HCT116 (cell line): ENCODE measurements at regions of chr9 and their contacts with region 1.

Region 1: GRCh38 chr9:122546190-122546589 is 6.7 kb upstream of the OR1N2 start:
- DNase-seq: no peak
- ATAC-seq: no peak
- H3K4me3 ChIP-seq: no peak overlapping the region
- H3K27ac ChIP-seq: no peak overlapping the region
- H3K4me1 ChIP-seq: no peaks in the 10 kb centered on the region
- H3K27me3 ChIP-seq: peaks cover 25% of the 10 kb centered on the region
- CTCF ChIP-seq: no peak
- POLR2A ChIP-seq: no peak
- RAD21 ChIP-seq: no peak

Region 2: DNA sequence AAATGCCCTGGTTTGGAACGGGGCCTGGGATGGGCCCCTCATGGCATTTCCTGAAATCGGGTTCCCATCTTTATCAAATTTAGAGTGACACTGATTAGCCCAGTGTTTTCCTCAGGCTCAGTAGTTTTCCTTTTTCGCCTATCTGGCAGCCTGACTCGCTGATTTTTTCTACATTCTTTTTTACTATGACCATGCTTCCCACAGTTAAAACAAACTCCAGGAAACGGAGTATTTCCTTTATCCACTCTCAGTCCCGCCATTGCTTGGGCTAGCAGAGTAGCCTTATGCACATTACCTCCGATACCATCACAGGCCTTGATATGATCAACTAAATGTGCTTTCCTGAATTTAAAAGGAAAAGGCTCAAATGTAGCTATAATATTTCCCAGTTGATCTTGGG is 73.8 kb after region 1 on chr9:
- CTCF ChIA-PET with region 1: no interaction called
- POLR2A ChIA-PET with region 1: no interaction called
- RAD21 ChIA-PET with region 1: no interaction called
- intact Hi-C with region 1: loop called (anchors 2 kb)
- DNase-seq: no peak
- ATAC-seq: no peak
- H3K4me3 ChIP-seq: no peak overlapping the region
- H3K27ac ChIP-seq: no peak overlapping the region
- H3K4me1 ChIP-seq: no peaks in the 10 kb centered on the region
- H3K27me3 ChIP-seq: peaks cover 14% of the 10 kb centered on the region
- CTCF ChIP-seq: no peak
- POLR2A ChIP-seq: no peak
- RAD21 ChIP-seq: no peak